Activated naive CD4-positive, alpha-beta T cell treated with anti-CD3 and anti-CD28 coated beads for 36 hours (primary cell): ENCODE measurements at regions of chr17 and their contacts with region 1.

Region 1: DNA sequence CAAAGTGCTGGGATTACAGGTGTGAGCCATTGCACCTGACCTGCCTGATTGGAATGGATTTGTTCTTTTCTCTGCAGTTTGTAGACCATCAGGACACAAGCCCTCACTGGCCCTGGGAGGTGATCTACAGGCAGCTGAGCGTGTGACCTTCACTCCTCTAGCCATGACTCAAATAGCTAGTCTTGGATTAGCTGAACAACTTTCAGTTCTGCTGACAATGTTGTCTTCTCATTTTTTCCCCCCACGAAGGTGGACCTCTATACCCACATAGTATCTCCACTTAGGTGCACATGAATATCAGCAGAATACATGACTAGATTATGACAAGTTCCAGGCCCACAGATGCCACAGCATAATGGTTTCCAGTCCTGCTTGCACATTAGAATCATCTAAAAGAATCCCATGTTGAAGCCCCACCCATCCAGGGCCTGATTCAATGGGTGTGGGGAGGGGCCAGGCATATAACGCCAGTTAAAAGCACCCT is 36.8 kb downstream of the HS3ST3B1 start:
- DNase-seq: peak; percentile 77
- H3K4me3 Mint-ChIP-seq: no peak overlapping the region
- H3K27ac Mint-ChIP-seq: peak overlapping the region; percentile 46
- H3K4me1 Mint-ChIP-seq: peaks cover 79% of the 10 kb centered on the region
- H3K27me3 Mint-ChIP-seq: no peaks in the 10 kb centered on the region

Region 2: DNA sequence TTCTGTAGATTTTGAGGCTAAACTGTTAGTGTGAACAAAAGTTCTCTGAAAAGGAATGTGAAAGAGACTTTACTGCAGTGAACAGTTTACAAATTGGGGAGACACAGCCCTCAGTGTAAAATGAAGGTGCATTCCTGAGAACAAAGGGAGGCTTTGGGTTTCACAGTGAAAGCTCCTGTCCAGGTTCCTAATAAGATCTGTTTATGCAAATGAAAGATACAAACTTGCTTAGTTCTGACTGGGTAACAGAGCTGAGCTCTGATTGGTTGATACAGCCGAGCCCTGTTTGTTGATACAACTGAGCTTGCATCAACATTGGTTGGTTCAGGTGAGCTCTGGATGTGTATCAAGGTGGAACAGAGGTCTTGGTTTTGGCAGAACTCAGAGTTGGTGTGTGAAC is 92.6 kb before region 1 on chr17:
- CTCF ChIA-PET with region 1: no interaction called
- intact Hi-C with region 1: no loop called
- DNase-seq: no peak
- H3K4me3 Mint-ChIP-seq: no peak overlapping the region
- H3K27ac Mint-ChIP-seq: no peak overlapping the region
- H3K4me1 Mint-ChIP-seq: no peaks in the 10 kb centered on the region
- H3K27me3 Mint-ChIP-seq: no peaks in the 10 kb centered on the region

Region 3: GRCh38 chr17:14308965-14309879 is 28.4 kb before region 1 on chr17:
- CTCF ChIA-PET with region 1: no interaction called
- intact Hi-C with region 1: loop called (anchors 1 kb)
- DNase-seq: peak; percentile 91
- H3K4me3 Mint-ChIP-seq: peak overlapping the region; percentile 72
- H3K27ac Mint-ChIP-seq: peak overlapping the region; percentile 8
- H3K4me1 Mint-ChIP-seq: peaks cover 69% of the 10 kb centered on the region
- H3K27me3 Mint-ChIP-seq: no peaks in the 10 kb centered on the region

Region 4: DNA sequence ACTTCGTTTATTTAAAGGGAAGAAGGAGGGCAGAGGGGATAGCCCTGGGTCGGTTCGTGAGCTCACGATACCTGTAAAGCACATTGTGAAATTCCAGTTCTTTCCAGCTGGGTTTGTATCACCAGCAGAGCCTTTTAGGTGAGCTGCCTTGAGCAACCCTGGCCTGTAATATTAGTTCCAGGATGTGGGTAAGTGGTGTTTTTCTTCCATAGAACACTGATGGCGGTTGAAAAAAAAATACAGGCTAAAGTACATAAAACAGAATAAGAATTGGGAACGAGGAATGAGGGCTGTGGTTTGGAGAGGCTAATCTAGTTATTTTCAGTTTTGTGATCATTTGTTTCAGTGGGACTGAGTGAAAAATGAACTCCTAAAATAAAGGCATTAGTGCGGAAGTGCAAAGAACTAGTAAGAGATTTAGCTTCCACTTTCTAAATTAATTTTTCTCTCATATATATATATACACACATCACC is 16.1 kb before region 1 on chr17:
- CTCF ChIA-PET with region 1: interaction called, 5 read pairs
- intact Hi-C with region 1: loop called (anchors 1 kb)
- DNase-seq: no peak
- H3K4me3 Mint-ChIP-seq: no peak overlapping the region
- H3K27ac Mint-ChIP-seq: peak overlapping the region; percentile 73
- H3K4me1 Mint-ChIP-seq: peaks cover 82% of the 10 kb centered on the region
- H3K27me3 Mint-ChIP-seq: no peaks in the 10 kb centered on the region

Region 5: GRCh38 chr17:14409292-14409691 is 71.7 kb after region 1 on chr17:
- CTCF ChIA-PET with region 1: no interaction called
- intact Hi-C with region 1: loop called (anchors 1 kb)
- DNase-seq: no peak
- H3K4me3 Mint-ChIP-seq: no peak overlapping the region
- H3K27ac Mint-ChIP-seq: no peak overlapping the region
- H3K4me1 Mint-ChIP-seq: peaks cover 12% of the 10 kb centered on the region
- H3K27me3 Mint-ChIP-seq: no peaks in the 10 kb centered on the region

Region 6: DNA sequence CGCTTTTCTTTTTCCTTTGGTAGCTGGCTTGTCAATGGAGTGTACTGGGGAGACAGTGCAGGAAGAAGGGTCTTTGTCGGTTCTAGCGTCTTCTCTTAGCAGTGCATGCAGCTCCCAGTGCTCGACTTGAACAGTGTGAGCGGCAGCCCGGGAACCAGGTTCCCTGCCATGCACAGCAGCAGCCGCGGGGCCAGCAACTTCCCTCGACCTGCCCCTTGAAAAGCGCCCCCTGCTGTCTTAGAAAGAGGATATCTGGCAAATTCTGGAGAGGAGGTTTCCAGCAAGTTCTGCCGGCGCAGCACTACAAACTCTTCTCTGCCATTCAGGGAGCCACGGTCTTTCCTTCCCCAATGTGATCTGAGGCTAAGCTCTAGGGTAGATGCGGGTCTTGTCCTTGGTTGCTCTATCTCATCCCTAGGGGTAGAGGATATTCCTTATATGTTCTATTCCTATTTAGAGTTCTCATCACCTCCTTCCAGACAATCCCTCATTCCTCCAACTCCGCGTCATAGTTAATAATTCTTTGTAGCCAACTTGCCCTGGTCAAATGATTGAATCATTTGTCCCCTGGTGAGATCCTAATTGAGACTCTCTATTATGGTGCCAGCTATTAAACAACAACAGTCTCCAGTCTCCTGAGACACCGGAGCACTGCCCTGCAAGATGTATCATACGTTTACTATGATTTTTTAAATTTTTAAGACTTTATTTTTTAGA is 476.2 kb after region 1 on chr17:
- CTCF ChIA-PET with region 1: no interaction called
- intact Hi-C with region 1: loop called (anchors 10 kb)
- DNase-seq: peak; percentile 42
- H3K4me3 Mint-ChIP-seq: no peak overlapping the region
- H3K27ac Mint-ChIP-seq: no peak overlapping the region
- H3K4me1 Mint-ChIP-seq: peaks cover 8% of the 10 kb centered on the region
- H3K27me3 Mint-ChIP-seq: peaks cover 13% of the 10 kb centered on the region